ENCODE measurements at regions of chr11 and their contacts with region 1.

Region 1: GRCh38 chr11:6603287-6604080 is at the starts of genes ILK and RRP8:
- DNase-seq: peak; percentile 88 to 91
- ATAC-seq: peak; percentile 87 to 89
- H3K4me3 ChIP-seq: peak within 1 kb of the TSS; percentile 87 to 97 (median 90)
- H3K27ac ChIP-seq: peak within 1 kb of the TSS; percentile 93 to 97 (median 94)
- H3K4me1 ChIP-seq: peaks cover 52% of the 10 kb centered on the region in 2 donors
- H3K27me3 ChIP-seq: no peaks in the 10 kb centered on the region
- CTCF ChIP-seq: peak in 4 of 5 experiments; percentile 25 to 59 (median 32)
- POLR2A ChIP-seq: peak; percentile 87 to 91
- total RNA-seq, gene ILK: 48.3 to 113 (median 70.5) TPM
- total RNA-seq, gene RRP8: 10.9 to 25.7 (median 14.9) TPM

Region 2: GRCh38 chr11:6234387-6235107 is 368.9 kb before region 1 on chr11 and contains the start of gene FHIP1B:
- in situ Hi-C with region 1: no loop called
- intact Hi-C with region 1: loop called (anchors 10 kb)
- DNase-seq: peak; percentile 100
- ATAC-seq: peak; percentile 96 to 98
- H3K4me3 ChIP-seq: peak within 1 kb of the TSS; percentile 73 to 79 (median 76)
- H3K27ac ChIP-seq: peak within 1 kb of the TSS; percentile 81 to 88 (median 86)
- H3K4me1 ChIP-seq: peaks cover 14 to 24% of the 10 kb centered on the region in 2 donors
- H3K27me3 ChIP-seq: no peaks in the 10 kb centered on the region
- CTCF ChIP-seq: no peak
- POLR2A ChIP-seq: peak; percentile 47 to 60
- total RNA-seq, gene FHIP1B: 23.9 to 41.7 (median 33.9) TPM

Region 3: DNA sequence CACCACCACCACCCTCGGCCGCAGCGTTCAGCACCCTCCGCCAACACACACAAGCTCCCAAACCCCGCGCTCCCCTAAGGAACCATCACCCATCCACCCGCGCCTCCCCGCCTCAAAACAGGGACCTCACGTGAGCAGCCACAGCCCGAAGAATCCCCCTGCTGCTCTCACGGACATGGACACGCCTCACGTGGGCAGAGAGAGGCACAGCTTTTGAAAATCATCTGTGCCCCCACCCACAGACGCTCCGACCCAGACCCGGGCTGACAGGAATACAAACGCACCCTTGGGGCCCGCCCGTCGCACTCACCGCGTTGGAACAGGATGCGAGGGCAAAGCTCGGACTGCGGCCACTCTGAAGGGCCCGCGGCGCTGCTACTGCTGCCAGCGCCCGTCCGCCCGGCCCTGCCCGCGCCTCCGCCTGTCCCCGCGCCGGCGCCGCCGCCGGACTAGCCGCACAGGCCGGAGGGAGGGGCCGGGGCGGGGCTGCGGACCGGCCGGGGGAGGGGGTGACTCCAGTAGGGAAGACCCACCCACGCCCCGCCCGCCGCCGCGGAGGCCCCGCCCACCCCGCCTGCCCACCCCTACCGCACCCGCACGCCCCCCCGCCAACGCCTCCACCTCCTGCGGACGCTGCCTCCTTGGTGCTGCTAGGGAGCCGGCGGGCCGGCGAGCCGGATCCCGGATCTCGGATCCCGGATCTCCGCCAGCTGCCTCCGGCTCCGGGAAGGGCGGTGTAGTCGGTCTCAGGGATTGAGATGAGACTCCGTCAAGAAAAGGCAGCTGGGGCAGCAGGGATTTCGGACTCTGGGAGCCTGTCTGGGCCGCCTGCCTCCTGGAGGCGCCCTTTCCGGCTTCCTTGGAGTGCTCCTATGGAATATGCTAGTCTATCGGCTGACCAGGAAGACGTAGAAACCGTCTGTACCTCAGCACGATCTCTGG is 129.7 kb before region 1 on chr11 and contains the start of gene TRIM3:
- in situ Hi-C with region 1: loop called in 1 of 4 experiments (anchors 10 kb)
- intact Hi-C with region 1: no loop called
- DNase-seq: peak; percentile 92 to 93
- ATAC-seq: peak; percentile 81 to 84
- H3K4me3 ChIP-seq: peak within 1 kb of the TSS; percentile 75 to 94 (median 80)
- H3K27ac ChIP-seq: peak within 1 kb of the TSS; percentile 87 to 99 (median 92)
- H3K4me1 ChIP-seq: peaks cover 14 to 15% of the 10 kb centered on the region in 2 donors
- H3K27me3 ChIP-seq: no peaks in the 10 kb centered on the region
- CTCF ChIP-seq: peak in 2 of 5 experiments; percentile 17 to 21
- POLR2A ChIP-seq: peak; percentile 87 to 93
- total RNA-seq, gene TRIM3: 15.3 to 20.0 (median 16.5) TPM

Region 4: DNA sequence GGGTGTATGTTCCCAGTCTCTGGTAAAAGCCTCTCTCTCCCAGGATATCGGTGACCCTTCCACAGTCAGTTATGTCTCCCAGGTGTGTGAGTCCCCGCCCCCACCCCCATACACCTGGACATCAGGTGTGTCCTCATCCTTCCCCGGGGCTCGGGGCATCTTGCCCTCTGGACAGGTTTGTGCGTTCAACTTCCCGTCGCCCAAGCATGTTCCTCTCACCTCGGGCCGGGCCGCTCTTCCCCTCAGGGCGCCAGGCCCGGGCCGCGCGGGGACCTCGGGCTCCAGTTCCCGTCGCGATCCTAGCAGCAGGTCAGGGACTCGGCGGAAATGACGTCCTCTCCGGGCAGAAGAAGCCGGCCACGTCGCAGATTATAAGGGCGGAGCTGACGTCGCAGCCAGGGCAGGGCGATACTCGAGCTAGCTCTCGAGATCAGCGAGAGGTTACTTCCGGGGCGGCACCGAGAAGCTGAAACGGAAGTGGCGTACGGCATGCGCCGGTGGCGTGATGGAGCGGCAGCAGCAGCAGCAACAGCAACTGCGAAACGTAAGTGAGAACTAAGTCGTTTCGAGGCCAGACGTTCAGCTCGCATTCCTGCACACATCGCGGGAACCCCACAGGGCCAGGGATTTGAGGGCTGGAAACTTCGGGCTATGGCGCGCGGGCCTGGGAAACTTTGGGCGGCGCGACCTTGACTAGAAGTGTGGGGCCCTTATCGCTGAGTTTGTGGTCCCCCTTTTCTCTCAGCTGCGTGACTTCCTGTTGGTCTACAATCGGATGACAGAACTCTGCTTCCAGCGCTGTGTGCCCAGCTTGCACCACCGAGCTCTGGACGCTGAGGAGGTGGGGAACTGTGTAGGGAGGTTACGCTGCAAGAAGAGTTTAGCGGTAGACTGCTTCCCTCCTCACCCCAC is 122.2 kb before region 1 on chr11 and contains the starts of genes ARFIP2 and TIMM10B:
- in situ Hi-C with region 1: loop called in 1 of 4 experiments (anchors 10 kb)
- intact Hi-C with region 1: loop called (anchors 5 kb)
- DNase-seq: peak; percentile 98 to 99
- ATAC-seq: peak; percentile 98 to 99
- H3K4me3 ChIP-seq: peak within 1 kb of the TSS; percentile 85 to 95 (median 87)
- H3K27ac ChIP-seq: peak within 1 kb of the TSS; percentile 93 to 97 (median 94)
- H3K4me1 ChIP-seq: peaks cover 24 to 31% of the 10 kb centered on the region in 2 donors
- H3K27me3 ChIP-seq: no peaks in the 10 kb centered on the region
- CTCF ChIP-seq: no peak
- POLR2A ChIP-seq: peak; percentile 93 to 97
- total RNA-seq, gene ARFIP2: 20.1 to 27.8 (median 24.4) TPM
- total RNA-seq, gene TIMM10B: 10.0 to 14.5 (median 12.4) TPM

Region 5: DNA sequence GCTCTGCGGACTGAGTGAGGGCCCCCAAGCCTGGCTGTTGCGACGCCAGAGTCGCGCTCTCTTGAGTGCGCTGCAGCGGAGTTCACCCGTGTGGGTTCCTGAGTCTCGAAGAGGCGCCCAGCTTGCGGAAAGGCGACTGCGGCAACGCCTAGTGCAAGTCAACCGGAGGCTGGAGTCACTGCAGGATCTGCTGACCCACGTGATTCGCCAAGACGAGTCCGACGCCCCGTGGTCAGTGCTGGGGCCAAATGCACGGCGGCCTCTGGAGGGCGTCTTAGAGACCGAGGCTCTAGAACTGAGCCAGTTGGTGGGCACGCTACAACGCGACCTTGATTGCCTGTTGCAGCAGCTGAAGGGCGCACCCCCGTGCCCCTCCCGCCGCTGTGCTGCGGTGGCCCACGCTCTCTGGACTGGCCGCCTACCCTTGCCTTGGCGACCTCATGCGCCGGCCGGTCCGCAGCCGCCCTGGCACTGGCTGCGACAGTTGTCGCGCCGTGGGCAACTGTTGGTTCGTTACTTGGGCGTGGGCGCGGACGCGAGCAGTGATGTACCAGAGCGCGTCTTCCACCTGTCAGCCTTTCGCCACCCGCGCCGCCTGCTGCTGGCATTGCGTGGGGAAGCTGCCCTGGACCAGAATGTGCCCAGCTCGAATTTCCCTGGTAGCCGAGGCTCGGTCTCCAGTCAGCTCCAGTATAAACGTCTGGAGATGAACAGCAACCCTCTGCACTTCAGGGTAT is 32.6 kb before region 1 on chr11:
- in situ Hi-C with region 1: no loop called
- intact Hi-C with region 1: loop called (anchors 1 kb)
- DNase-seq: peak in 1 of 2 donors; percentile 89
- ATAC-seq: peak in 1 of 2 donors; percentile 69
- H3K4me3 ChIP-seq: peak overlapping the region in 2 of 4 donors; percentile 8 to 35
- H3K27ac ChIP-seq: peak overlapping the region in 3 of 4 donors; percentile 74 to 86 (median 80)
- H3K4me1 ChIP-seq: peaks cover 25 to 28% of the 10 kb centered on the region in 2 donors
- H3K27me3 ChIP-seq: no peaks in the 10 kb centered on the region
- CTCF ChIP-seq: peak in 2 of 5 experiments; percentile 36 to 37
- POLR2A ChIP-seq: peak; percentile 53 to 71

Region 6: DNA sequence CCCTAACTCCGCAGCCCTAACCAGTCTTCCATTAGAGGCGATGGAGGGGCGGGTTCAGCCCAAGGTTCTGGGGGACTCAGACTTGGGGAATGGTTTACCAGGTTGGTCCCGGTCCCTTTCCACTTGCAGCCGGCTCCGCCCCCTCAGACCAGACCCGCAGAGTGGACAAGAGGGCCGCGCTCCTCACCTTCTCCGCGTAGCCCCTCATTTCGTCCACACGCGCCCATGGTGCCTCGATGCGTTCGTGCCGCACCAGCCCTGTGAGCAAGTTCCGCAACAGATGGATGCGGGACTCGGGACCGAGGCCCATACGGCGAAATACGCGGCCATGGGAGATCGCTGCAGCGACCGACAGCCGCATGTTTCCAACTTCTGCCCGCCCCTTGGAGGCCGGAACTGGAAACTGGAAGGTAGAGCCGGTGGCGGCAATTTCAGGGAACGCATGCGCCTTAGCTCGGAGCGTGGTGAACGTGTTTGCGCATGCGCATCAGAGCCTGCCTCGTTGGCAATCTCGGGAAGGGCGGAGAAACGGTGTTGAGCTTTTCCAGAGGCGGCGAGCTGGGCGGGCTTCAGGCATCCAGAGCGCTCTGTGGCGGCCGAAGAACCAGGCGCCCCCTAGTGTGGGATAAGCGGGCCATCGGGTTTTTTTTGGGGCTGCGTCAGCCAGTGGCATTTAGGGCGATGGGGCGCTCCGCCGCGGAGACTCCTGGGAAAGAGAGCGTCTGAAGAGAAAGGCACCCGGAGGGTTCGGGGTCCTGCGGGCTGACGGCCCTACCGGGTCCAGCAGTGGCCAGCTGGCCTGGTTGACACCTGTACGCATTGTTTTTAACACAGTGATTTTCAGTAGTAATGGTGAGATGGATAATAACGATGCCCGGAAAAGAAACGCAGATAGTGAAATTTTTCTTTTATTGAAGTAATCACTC is 79.7 kb after region 1 on chr11 and contains the start of gene MRPL17:
- in situ Hi-C with region 1: loop called in 3 of 4 experiments (anchors 5 to 10 kb)
- intact Hi-C with region 1: loop called (anchors 1 kb)
- DNase-seq: peak; percentile 98 to 99
- ATAC-seq: peak; percentile 99
- H3K4me3 ChIP-seq: peak within 1 kb of the TSS; percentile 81 to 98 (median 92)
- H3K27ac ChIP-seq: peak within 1 kb of the TSS; percentile 82 to 95 (median 87)
- H3K4me1 ChIP-seq: peaks cover 9 to 22% of the 10 kb centered on the region in 2 donors
- H3K27me3 ChIP-seq: no peaks in the 10 kb centered on the region
- CTCF ChIP-seq: peak; percentile 77 to 94 (median 92)
- POLR2A ChIP-seq: peak; percentile 75 to 78
- total RNA-seq, gene MRPL17: 25.1 to 33.4 (median 27.7) TPM

Measured in gastrocnemius medialis (tissue), 4 donors.